ENCODE measurements at regions of chr9 and their contacts with region 1.

Region 1: GRCh38 chr9:123669346-123669745 is 260.6 kb downstream of the DENND1A start:
- DNase-seq: no peak
- ATAC-seq: no peak
- H3K4me3 ChIP-seq: no peak overlapping the region
- H3K27ac ChIP-seq: no peak overlapping the region
- H3K4me1 ChIP-seq: no peaks in the 10 kb centered on the region
- H3K27me3 ChIP-seq: no peaks in the 10 kb centered on the region
- CTCF ChIP-seq: no peak
- EP300 ChIP-seq: no peak
- POLR2A ChIP-seq: no peak
- RAD21 ChIP-seq: no peak

Region 2: GRCh38 chr9:123679322-123679987 is 10.1 kb after region 1 on chr9:
- CTCF ChIA-PET with region 1: interaction called, 5 read pairs
- POLR2A ChIA-PET with region 1: no interaction called
- RAD21 ChIA-PET with region 1: interaction called, 5 read pairs
- SMC1A ChIA-PET with region 1: interaction called, 12 read pairs
- in situ Hi-C with region 1: no loop called
- intact Hi-C with region 1: no loop called
- DNase-seq: peak; percentile 95
- ATAC-seq: peak; percentile 97
- H3K4me3 ChIP-seq: no peak overlapping the region
- H3K27ac ChIP-seq: peak overlapping the region; percentile 72
- H3K4me1 ChIP-seq: peaks cover 31% of the 10 kb centered on the region
- H3K27me3 ChIP-seq: no peaks in the 10 kb centered on the region
- CTCF ChIP-seq: no peak
- EP300 ChIP-seq: peak in 1 of 2 experiments; percentile 82; a peak in 3 of 4 replicates
- POLR2A ChIP-seq: peak; percentile 60; the same call in 1 of the 2 replicates
- RAD21 ChIP-seq: peak; percentile 21; the same call in 1 of the 2 replicates

Region 3: GRCh38 chr9:123686131-123686828 is 16.9 kb after region 1 on chr9:
- CTCF ChIA-PET with region 1: interaction called, 4 read pairs
- POLR2A ChIA-PET with region 1: interaction called, 4 read pairs
- RAD21 ChIA-PET with region 1: no interaction called
- SMC1A ChIA-PET with region 1: interaction called, 11 read pairs
- in situ Hi-C with region 1: no loop called
- intact Hi-C with region 1: no loop called
- DNase-seq: no peak
- ATAC-seq: peak; percentile 8; the same call in 1 of the 3 replicates
- H3K4me3 ChIP-seq: no peak overlapping the region
- H3K27ac ChIP-seq: no peak overlapping the region
- H3K4me1 ChIP-seq: peaks cover 33% of the 10 kb centered on the region
- H3K27me3 ChIP-seq: no peaks in the 10 kb centered on the region
- CTCF ChIP-seq: no peak
- EP300 ChIP-seq: no peak
- POLR2A ChIP-seq: no peak
- RAD21 ChIP-seq: no peak

Region 4: DNA sequence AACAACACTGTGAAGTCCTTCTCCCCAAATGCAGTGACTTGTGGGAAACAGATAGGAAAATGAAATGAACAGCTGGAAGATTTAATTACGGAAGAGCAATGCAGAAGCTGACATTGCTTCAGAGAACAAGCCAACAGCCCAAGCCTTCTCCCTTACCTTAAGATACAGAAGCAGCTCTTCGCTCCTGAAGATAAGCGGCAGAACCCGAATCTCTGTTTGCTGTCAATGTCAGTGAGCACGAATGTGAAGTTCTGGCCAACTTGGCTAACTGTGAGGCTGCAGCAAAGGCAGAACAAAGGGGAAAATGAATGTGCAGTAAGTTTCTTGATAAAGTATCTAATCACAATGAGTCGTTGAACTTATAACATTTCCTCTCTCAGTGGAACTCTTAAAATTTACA is 88.2 kb after region 1 on chr9:
- CTCF ChIA-PET with region 1: no interaction called
- POLR2A ChIA-PET with region 1: no interaction called
- RAD21 ChIA-PET with region 1: no interaction called
- SMC1A ChIA-PET with region 1: no interaction called
- in situ Hi-C with region 1: no loop called
- intact Hi-C with region 1: no loop called
- DNase-seq: no peak
- ATAC-seq: no peak
- H3K4me3 ChIP-seq: no peak overlapping the region
- H3K27ac ChIP-seq: no peak overlapping the region
- H3K4me1 ChIP-seq: peaks cover 17% of the 10 kb centered on the region
- H3K27me3 ChIP-seq: no peaks in the 10 kb centered on the region
- CTCF ChIP-seq: no peak
- EP300 ChIP-seq: no peak
- POLR2A ChIP-seq: no peak
- RAD21 ChIP-seq: no peak

Measured in GM12878 (cell line).